Sciatic nerve (tissue), 2 donors: ENCODE measurements at regions of chr17 and their contacts with region 1.

Region 1: DNA sequence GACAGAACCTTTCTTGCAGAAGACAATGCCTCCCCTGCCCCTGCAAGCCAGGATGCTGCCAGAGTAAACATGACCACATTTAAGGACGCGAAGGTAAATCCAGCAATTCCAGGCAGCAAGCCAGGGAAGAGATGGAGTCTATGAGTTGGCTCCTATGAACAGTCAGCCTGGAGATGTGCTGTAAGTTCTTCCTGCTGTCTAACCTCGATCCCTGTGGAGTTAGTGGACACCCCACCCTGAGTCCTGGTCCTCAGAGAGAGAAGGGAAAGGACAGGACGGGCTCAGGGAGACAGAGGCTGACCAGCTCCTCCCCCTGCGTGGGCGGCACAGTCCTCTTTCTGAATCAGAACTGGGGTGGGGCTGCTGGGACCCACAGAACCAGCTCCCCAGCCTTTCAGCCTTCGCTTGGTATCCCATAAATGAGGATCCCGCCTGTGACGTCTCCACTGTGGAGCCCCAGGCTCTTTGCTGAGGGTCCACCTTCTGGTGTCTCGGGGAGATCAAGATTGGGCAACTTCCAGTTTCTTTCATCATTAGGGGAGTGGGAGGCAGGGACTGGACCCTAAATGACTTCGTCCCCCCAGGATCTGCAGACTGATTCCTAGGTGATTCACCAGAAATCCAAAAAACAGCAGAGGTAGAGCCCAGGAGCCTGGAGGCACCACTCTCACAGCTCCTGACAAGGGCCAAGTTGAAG is 24.8 kb downstream of the CDC42EP4 start:
- DNase-seq: no peak
- ATAC-seq: no peak

Region 2: GRCh38 chr17:73255671-73256181 is 31.3 kb before region 1 on chr17:
- intact Hi-C with region 1: no loop called
- DNase-seq: peak; percentile 78
- ATAC-seq: peak; percentile 81

Region 3: DNA sequence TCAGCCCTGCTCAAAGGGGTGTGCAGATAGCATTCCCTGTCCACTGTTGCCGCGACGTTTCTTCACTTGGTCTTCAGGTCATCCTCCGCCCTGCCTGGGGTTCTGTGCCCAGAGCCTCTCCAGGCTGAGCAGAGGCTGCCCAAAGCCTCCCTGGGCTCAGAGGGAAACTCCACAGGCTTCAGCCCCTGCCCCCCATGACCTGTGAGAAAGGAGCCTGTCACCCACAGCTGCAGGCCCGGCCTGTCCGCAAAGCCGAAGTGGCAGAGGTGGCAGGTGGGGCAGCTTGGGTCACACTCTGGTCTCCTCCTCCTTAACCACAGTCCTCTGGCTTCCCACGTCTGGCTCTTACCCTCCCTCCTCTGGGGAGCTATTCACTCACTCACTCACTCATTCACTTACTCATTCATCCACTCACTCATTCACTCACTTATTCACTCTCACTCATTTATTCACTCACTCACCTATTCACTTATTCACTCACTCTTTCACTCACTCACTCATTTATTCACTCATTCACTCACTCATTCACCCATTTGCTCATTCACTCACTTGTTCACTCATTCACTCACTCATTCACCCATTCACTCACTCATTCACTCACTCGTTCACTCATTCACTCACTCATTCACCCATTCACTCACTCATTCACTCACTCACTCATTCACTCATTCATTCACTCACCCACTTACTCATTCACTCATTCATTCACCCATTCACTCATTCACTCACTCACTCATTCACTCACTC is 18.3 kb before region 1 on chr17:
- intact Hi-C with region 1: loop called (anchors 2 kb)
- DNase-seq: no peak
- ATAC-seq: no peak